ENCODE measurements at regions of chr6 and their contacts with region 1.

Region 1: DNA sequence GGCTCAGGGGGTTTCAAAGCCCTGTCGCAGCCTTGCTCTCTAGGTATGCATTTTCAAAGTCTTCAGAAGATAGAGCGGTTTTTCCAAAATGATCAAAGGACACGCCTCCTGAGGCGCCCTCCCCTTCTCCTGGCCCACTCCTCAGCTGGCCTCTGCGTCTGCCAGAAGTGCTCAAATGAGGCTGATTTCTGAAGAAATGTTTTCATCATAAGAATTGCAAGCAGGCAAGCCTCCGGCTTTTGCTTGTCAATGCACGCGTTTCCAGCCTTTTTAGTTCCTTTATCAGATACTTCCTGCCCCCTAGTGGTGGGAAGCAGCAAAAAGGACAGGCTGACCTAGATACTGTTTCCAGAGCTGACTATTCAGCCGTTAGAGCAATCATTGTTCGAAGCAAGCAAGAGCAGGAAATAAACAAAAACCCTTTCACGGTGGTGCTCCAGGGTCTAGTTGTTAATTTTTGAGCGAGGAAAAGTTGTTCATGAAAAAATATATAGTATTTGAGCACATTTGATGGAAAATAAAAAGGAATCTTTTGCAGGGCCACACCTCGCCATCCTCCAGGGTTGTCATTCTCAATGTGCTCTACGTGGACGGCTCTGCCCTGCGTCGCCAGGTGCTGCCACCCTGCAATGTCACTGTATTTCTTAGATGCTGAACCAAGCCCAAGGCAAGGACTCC is 93.4 kb upstream of the ASF1A start:
- DNase-seq: peak; percentile 33 to 87
- H3K4me3 ChIP-seq: peak overlapping the region in 1 of 2 donors; percentile 23
- H3K27ac ChIP-seq: no peak overlapping the region
- H3K4me1 ChIP-seq: peaks cover 0 to 3% of the 10 kb centered on the region in 2 donors
- H3K27me3 ChIP-seq: no peaks in the 10 kb centered on the region
- CTCF ChIP-seq: peak; percentile 40 to 78 (median 78)

Region 2: DNA sequence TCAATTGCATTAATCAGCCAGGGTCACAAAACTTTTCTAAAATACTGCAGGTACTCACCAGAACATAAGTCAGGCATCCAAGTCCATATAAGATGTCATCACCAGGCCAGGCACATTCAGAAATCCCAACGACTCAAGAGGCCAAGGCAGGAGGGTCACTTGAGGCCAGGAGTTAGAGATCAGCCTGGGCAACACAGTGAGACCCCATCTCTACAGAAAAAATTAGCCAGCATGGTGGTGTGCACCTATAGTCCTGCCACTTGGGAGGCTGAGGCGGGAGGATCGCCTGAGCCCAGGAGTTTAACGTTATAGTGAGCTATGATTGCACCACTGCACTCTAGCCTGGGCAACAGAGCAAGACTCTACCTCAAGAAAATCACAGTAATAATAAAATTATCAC is 530.9 kb before region 1 on chr6:
- intact Hi-C with region 1: loop called (anchors 5 kb)
- DNase-seq: no peak
- H3K4me3 ChIP-seq: no peak overlapping the region
- H3K27ac ChIP-seq: no peak overlapping the region
- H3K4me1 ChIP-seq: no peaks in the 10 kb centered on the region
- H3K27me3 ChIP-seq: no peaks in the 10 kb centered on the region
- CTCF ChIP-seq: no peak

Region 3: DNA sequence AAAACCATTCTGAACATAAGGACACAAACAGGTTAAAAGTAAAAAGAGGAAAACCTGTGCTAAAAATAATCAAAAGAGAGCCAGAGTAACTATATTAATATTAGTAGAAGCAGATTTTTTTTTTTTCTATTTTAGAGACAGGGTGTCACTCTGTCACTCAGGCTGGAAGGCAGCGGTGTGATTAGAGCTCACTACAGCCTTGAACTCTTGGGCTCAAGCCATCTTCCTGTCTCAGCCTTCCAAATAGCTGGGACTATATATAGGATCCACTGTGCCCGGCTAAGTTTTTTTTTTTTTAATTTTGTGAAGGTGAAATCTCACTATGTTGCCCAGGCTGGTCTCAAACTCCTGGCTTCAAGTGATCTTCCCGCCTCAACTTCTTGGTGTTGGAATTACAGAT is 285.8 kb before region 1 on chr6:
- intact Hi-C with region 1: loop called (anchors 5 kb)
- DNase-seq: no peak
- H3K4me3 ChIP-seq: no peak overlapping the region
- H3K27ac ChIP-seq: peak overlapping the region; percentile 33 to 51
- H3K4me1 ChIP-seq: peaks cover 0 to 5% of the 10 kb centered on the region in 2 donors
- H3K27me3 ChIP-seq: no peaks in the 10 kb centered on the region
- CTCF ChIP-seq: no peak

Region 4: DNA sequence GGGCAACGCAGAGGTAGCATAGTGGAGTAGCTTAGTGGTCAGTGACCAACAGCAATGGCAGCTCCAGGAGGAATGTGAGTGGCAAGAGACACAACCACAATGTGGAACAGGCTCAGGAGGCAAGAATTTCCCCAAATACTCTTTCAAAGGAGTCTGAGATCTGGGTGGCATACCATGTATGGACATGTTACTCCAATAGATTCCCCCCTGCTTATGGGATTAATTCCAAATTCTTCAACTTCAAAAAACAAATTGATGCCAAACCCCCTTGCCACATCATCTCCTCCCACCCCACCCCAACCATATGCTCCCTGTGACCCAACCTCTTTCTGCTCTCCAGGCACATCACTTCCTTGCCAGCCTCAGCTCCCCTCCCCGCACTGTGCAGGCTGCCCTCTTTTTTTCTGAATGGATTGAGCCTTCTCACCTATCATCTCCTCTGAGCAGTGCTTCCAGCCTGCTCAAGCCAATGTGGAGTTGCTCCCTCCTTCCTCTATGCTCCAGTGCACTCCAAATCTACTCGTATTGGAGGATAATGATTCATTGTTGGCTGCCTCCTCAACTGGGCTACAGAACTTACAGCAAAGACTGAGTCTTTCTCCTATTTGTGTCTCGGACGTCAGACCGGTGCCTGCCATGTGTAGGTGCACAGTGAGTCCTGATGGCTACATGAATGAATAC is 56.1 kb before region 1 on chr6:
- intact Hi-C with region 1: no loop called
- DNase-seq: no peak
- H3K4me3 ChIP-seq: no peak overlapping the region
- H3K27ac ChIP-seq: no peak overlapping the region
- H3K4me1 ChIP-seq: peaks cover 0 to 4% of the 10 kb centered on the region in 2 donors
- H3K27me3 ChIP-seq: no peaks in the 10 kb centered on the region
- CTCF ChIP-seq: no peak

Measured in ascending aorta (tissue), 2 donors.